Activated CD8-positive, alpha-beta T cell treated with anti-CD3 and anti-CD28 coated beads, Interleukin-2, amount 10 ng/mL, durations not matched to agents 7 days and 5 days (primary cell): ENCODE measurements at regions of chr16 and their contacts with region 1.

Region 1: GRCh38 chr16:84277237-84277823 is 17.3 kb upstream of the WFDC1 start:
- DNase-seq: peak; percentile 78
- ATAC-seq: peak; percentile 89
- H3K4me3 Mint-ChIP-seq: no peak overlapping the region
- H3K27ac Mint-ChIP-seq: no peak overlapping the region
- H3K4me1 Mint-ChIP-seq: no peaks in the 10 kb centered on the region
- H3K27me3 Mint-ChIP-seq: peaks cover 4% of the 10 kb centered on the region

Region 2: DNA sequence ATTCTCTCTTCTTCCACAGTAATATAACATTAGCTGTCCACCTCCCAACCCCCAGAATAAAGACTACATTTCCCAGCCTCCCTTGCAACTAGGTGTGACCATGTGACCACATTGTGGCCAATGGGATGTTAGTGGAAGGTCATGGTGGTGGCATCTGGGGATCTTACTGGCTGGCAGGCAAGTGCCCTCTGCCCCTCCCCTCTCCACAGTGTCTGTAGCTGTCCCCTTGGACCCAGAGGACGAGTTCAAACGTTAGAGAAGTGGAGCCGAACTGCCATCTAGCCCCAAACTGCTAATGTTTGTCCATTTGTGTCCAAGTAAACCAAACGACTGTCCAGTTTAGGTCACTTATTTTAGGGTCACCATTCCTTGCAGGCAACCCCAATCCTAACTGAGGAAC is 10.9 kb before region 1 on chr16:
- CTCF ChIA-PET with region 1: interaction called, 11 read pairs
- POLR2A ChIA-PET with region 1: no interaction called
- DNase-seq: peak; percentile 29
- ATAC-seq: peak; percentile 57
- H3K4me3 Mint-ChIP-seq: no peak overlapping the region
- H3K27ac Mint-ChIP-seq: no peak overlapping the region
- H3K4me1 Mint-ChIP-seq: no peaks in the 10 kb centered on the region
- H3K27me3 Mint-ChIP-seq: peaks cover 2% of the 10 kb centered on the region